Transverse colon (tissue), 4 donors: ENCODE measurements at regions of chr6 and their contacts with region 1.

Region 1: DNA sequence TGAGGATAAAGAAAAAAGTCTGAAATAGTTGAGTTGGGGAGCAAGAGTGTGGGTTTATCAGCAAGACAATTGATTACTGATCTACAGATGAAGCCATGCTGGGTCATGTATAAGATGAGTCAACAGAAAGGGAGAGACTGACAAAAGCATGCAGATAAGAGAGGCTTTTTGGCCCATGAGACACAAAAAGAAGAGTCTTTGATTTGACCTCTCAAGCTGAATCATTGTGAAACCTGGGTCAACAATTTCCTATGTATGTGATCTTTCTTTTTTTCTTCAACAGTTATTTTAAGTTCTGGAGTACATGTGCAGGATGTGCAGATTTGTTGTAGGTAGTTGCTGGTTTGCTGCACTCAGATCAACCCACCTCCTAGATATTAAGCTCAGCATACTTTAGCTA is 15.9 kb downstream of the RIMS1 start:
- DNase-seq: no peak
- H3K4me3 ChIP-seq: no peak overlapping the region
- H3K27ac ChIP-seq: no peak overlapping the region
- H3K4me1 ChIP-seq: no peaks in the 10 kb centered on the region
- H3K27me3 ChIP-seq: no peaks in the 10 kb centered on the region
- CTCF ChIP-seq: no peak
- EP300 ChIP-seq: no peak
- POLR2A ChIP-seq: no peak

Region 2: DNA sequence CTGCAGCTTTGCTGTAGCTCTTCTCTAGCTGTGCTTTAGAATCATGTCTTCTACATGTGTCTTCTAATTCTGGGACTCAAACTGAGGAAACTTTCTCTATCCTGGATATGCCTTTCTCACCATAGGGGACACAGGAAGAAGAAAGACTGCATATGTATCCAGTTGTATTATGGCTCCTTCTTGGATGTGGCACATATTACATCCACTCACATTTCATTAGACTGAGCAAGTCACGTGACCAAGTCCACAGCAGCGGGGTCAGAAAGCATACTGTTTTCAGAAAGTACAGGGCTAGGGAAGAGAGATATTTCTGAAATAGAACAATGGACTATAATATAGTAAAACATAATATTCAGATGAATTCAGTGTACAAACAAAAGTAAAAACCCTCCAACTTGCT is 203.6 kb before region 1 on chr6:
- in situ Hi-C with region 1: no loop called
- intact Hi-C with region 1: no loop called
- DNase-seq: no peak
- H3K4me3 ChIP-seq: no peak overlapping the region
- H3K27ac ChIP-seq: no peak overlapping the region
- H3K4me1 ChIP-seq: peaks cover 0 to 9% (median 0%) of the 10 kb centered on the region in 4 donors
- H3K27me3 ChIP-seq: no peaks in the 10 kb centered on the region
- CTCF ChIP-seq: no peak
- EP300 ChIP-seq: no peak
- POLR2A ChIP-seq: no peak

Region 3: DNA sequence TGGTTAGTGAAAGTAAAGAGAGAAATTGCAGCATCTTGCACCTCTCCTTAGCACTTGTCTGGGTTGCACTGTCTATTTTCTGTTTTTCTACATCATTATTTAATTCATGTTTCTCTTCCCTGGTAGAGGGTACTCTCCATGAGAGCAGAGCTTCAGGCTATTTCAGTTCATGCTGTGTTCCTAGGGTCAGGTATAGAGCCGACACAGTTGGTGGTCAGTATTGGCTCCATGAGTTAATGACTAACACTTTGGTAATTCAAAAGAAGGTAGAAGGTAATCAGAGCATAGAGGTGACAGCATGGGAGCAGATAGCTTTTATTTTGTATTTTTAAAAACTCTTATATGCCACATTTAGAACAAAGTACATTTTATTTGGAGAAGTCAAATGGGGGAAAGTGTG is 26.8 kb after region 1 on chr6:
- in situ Hi-C with region 1: no loop called
- intact Hi-C with region 1: loop called (anchors 1 kb)
- DNase-seq: no peak
- H3K4me3 ChIP-seq: no peak overlapping the region
- H3K27ac ChIP-seq: no peak overlapping the region
- H3K4me1 ChIP-seq: no peaks in the 10 kb centered on the region
- H3K27me3 ChIP-seq: no peaks in the 10 kb centered on the region
- CTCF ChIP-seq: no peak
- EP300 ChIP-seq: no peak
- POLR2A ChIP-seq: no peak

Region 4: DNA sequence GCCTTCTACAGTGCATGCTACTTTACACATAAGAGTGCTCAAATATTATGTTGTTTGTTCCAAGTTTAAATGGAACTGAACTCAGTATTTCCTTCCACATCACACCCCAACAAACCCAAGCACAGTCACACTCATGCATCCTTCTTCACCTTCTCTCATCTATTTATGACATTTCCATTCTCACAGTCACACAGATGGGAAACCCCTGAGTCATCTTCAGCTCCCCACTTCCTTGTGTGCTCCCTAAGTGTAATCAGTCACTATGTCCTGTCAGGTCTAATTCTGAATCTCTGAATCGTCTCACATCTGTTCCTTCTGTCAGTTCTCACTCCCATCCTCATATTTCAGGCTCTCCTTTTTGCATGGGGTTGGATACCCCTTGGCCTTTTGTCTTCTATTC is 80.1 kb after region 1 on chr6:
- in situ Hi-C with region 1: no loop called
- intact Hi-C with region 1: no loop called
- DNase-seq: no peak
- H3K4me3 ChIP-seq: no peak overlapping the region
- H3K27ac ChIP-seq: no peak overlapping the region
- H3K4me1 ChIP-seq: no peaks in the 10 kb centered on the region
- H3K27me3 ChIP-seq: no peaks in the 10 kb centered on the region
- CTCF ChIP-seq: no peak
- EP300 ChIP-seq: no peak
- POLR2A ChIP-seq: no peak